ENCODE measurements at regions of chr9 and their contacts with region 1.

Region 1: DNA sequence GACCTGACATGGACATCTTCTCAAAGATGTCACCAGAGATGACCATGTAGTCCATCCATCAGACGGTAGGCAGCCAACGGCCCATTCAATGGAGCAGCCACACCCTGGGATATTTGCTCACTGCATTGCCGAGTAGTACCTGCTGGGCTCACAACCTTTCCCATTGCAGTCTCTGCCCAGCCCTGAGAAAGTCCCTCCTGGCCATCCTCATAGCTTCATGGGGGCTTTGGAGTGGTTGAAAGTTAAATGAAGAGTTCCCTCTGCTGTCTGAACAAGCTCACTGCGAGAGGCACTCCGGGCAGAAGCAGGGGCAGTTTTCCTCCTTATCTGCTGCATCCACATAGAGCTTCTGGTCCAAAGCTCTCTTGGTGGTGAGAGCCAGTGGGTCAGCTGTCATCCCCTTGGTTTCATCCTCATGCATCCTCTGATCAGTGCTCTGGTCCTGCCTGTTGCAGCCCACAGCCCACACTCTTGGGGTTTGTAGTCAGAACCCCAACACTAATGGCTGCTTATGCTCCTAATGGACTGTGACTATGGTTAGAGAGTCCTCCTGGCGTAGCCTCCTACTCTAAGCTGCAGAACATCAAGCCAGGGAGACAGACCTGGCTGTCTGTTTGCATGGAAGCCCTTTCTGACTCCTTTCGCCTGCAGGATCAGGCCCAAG is 23.4 kb downstream of the TNFSF8 start:
- DNase-seq: peak in 1 of 4 experiments; percentile 12
- ATAC-seq: peak; percentile 79
- H3K4me3 ChIP-seq: no peak overlapping the region
- H3K27ac ChIP-seq: no peak overlapping the region
- H3K4me1 ChIP-seq: no peaks in the 10 kb centered on the region
- H3K27me3 ChIP-seq: no peaks in the 10 kb centered on the region
- CTCF ChIP-seq: peak; percentile 14 to 54 (median 40); a peak in 5 of 6 replicates
- EP300 ChIP-seq: no peak
- POLR2A ChIP-seq: no peak
- RAD21 ChIP-seq: peak; percentile 54 to 66

Region 2: GRCh38 chr9:114405294-114406034 is 501.6 kb before region 1 on chr9:
- CTCF ChIA-PET with region 1: interaction called, 4 read pairs
- POLR2A ChIA-PET with region 1: no interaction called
- in situ Hi-C with region 1: loop called (anchors 10 kb)
- intact Hi-C with region 1: loop called (anchors 2 kb)
- DNase-seq: peak; percentile 75 to 83 (median 80)
- ATAC-seq: peak; percentile 97
- H3K4me3 ChIP-seq: no peak overlapping the region
- H3K27ac ChIP-seq: no peak overlapping the region
- H3K4me1 ChIP-seq: no peaks in the 10 kb centered on the region; a peak in 2 of 5 replicates
- H3K27me3 ChIP-seq: peaks cover 0 to 5% of the 10 kb centered on the region in 2 experiments; a peak in 1 of 5 replicates
- CTCF ChIP-seq: peak; percentile 85 to 91 (median 88)
- EP300 ChIP-seq: no peak
- POLR2A ChIP-seq: no peak
- RAD21 ChIP-seq: peak; percentile 76 to 88

Region 3: GRCh38 chr9:114662081-114662989 is 244.7 kb before region 1 on chr9:
- CTCF ChIA-PET with region 1: no interaction called
- POLR2A ChIA-PET with region 1: no interaction called
- in situ Hi-C with region 1: no loop called
- intact Hi-C with region 1: loop called (anchors 5 kb)
- DNase-seq: peak; percentile 66 to 82 (median 79)
- ATAC-seq: peak; percentile 95
- H3K4me3 ChIP-seq: no peak overlapping the region
- H3K27ac ChIP-seq: no peak overlapping the region
- H3K4me1 ChIP-seq: no peaks in the 10 kb centered on the region
- H3K27me3 ChIP-seq: peaks cover 13 to 59% of the 10 kb centered on the region in 2 experiments; a peak in 4 of 5 replicates
- CTCF ChIP-seq: peak; percentile 70 to 89 (median 80)
- EP300 ChIP-seq: no peak
- POLR2A ChIP-seq: no peak
- RAD21 ChIP-seq: peak; percentile 47 to 73; a peak in 3 of 4 replicates

Region 4: DNA sequence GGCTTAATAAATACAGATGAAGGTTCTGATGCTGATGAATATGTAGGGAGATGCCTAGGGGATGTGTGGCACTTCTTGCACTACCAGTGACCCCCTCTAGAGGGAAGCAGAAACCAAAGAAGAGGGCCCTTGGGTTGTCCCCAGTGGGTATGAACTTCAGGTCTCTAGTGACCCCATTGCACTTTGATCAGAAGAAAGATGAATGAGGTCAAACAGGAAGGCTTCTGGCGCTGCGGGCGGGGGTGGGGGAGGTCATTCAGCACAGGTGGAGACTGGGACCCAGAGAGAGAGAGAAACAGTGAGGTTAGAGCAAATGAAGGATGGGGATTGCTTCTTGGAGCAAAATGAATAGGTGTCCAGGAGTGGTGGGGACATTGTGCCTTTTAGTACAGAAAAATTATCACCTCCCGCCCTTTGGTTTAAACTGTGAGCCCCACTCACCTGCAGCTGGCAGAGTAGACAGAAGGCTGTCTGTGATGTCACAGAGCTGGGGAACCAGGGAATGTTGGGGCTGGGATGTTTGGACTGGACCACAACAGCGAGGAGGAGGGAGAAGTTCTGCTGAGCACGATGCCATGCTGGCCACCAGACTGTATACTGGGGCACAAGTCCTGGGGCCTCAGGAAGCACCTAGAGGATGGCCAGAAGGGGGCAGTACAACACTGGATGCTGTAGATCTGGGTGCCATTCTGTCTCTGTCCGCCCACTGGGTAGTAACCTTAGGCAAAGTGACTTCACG is 225.3 kb before region 1 on chr9 and contains the start of gene TEX48:
- CTCF ChIA-PET with region 1: interaction called, 3 read pairs
- POLR2A ChIA-PET with region 1: no interaction called
- in situ Hi-C with region 1: no loop called
- intact Hi-C with region 1: loop called (anchors 2 kb)
- DNase-seq: peak; percentile 65 to 77 (median 75)
- ATAC-seq: peak; percentile 94
- H3K4me3 ChIP-seq: no peak within 1 kb of the TSS
- H3K27ac ChIP-seq: no peak within 1 kb of the TSS
- H3K4me1 ChIP-seq: peaks cover 0 to 3% of the 10 kb centered on the region in 2 experiments; a peak in 1 of 5 replicates
- H3K27me3 ChIP-seq: peaks cover 0 to under 1% of the 10 kb centered on the region in 2 experiments; a peak in 2 of 5 replicates
- CTCF ChIP-seq: peak; percentile 67 to 79 (median 78)
- EP300 ChIP-seq: no peak
- POLR2A ChIP-seq: no peak
- RAD21 ChIP-seq: peak; percentile 39 to 71
- polyA plus RNA-seq, gene TEX48: not detected

Region 5: GRCh38 chr9:114738581-114739316 is 168.3 kb before region 1 on chr9:
- CTCF ChIA-PET with region 1: interaction called, 3 read pairs
- POLR2A ChIA-PET with region 1: no interaction called
- in situ Hi-C with region 1: loop called (anchors 25 kb)
- intact Hi-C with region 1: loop called (anchors 1 kb)
- DNase-seq: peak; percentile 68 to 75 (median 72)
- ATAC-seq: peak; percentile 97
- H3K4me3 ChIP-seq: no peak overlapping the region
- H3K27ac ChIP-seq: no peak overlapping the region
- H3K4me1 ChIP-seq: no peaks in the 10 kb centered on the region
- H3K27me3 ChIP-seq: no peaks in the 10 kb centered on the region
- CTCF ChIP-seq: peak; percentile 74 to 87 (median 83)
- EP300 ChIP-seq: no peak
- POLR2A ChIP-seq: no peak
- RAD21 ChIP-seq: peak; percentile 89 to 94

Measured in K562 (cell line).